Right ventricle myocardium inferior (tissue), 1 donor: ENCODE measurements at regions of chr16 and their contacts with region 1.

Region 1: DNA sequence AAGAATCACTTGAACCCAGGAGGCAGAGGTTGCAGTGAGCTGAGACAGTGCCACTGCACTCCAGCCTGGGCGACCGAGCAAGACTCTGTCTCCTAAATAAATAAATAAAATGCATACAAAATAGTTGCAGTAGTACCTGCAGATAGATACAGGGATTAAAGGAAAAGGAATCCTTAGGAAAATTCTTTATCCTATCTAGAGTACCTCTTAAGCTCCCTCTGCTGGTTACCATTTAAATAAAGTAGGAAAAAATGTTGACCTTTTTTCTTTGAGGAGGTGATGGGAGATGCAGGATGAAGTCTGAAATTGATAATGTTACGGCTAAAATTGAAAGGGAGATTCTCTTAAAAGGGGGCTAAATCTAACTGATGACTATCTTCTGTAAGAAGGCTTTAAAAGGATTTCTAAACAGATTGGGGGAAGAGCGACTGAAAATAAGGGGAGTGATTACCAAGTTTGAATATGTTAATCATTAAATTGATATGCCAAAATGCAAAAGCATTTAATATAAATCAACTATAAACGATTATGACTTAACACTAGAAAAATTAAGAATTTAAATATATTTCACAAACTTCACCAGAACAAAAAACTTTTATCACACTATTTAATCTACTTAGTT is 29.4 kb downstream of the C16orf87 start:
- DNase-seq: no peak
- ATAC-seq: peak; percentile 39

Region 2: GRCh38 chr16:46673320-46674013 is 128.1 kb before region 1 on chr16:
- intact Hi-C with region 1: loop called (anchors 2 kb)
- DNase-seq: no peak
- ATAC-seq: peak; percentile 93

Region 3: DNA sequence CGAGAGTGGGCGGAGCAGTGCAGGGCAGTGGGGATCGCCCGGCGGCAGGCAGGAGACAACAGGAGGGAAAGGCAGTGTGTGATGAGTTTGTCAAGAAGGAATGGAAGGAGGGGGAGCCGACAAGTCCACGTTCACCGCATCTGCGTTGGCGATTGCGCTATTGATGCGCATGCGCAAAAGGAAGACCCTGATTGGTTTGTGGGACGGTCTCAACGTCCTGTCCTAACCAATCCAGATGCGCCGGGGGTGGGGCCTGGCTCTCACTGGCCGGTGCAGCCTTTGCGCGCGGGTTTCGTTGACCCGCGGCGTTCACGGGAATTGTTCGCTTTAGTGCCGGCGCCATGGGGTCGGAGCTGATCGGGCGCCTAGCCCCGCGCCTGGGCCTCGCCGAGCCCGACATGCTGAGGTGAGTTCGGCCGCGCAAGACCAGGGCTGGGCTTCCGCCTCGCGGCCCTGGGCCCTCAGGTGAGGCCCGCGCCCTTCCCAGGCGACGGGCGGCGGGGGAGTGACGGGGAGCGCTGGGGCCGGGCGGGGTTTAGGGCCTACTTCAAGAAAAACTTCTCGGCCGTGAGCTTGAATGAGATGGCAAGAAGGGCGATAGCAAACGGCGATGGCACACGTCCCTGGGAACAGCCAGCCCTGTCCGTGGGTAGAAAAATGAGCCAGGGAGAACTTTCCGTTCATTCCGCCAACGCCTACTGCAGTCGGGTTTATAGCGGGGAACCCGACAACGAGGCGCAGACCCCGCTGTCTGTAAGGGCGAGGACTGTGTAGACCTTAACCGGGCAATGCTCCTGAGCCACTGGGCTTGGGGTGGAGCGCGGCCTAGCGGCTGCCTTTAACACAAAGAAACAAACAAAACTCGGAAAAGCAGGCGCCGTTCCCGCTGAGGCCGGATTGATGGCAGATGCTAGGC is 111.9 kb before region 1 on chr16 and contains the start of gene ORC6:
- intact Hi-C with region 1: loop called (anchors 5 kb)
- DNase-seq: peak; percentile 100
- ATAC-seq: peak; percentile 94
- total RNA-seq, gene ORC6: 2.5 TPM

Region 4: GRCh38 chr16:46728806-46729205 is 72.7 kb before region 1 on chr16:
- intact Hi-C with region 1: no loop called
- DNase-seq: no peak
- ATAC-seq: peak; percentile 12

Region 5: GRCh38 chr16:46757339-46758050 is 44.0 kb before region 1 on chr16:
- intact Hi-C with region 1: loop called (anchors 2 kb)
- DNase-seq: peak; percentile 83
- ATAC-seq: peak; percentile 84